ENCODE measurements at regions of chr6 and their contacts with region 1.

Region 1: DNA sequence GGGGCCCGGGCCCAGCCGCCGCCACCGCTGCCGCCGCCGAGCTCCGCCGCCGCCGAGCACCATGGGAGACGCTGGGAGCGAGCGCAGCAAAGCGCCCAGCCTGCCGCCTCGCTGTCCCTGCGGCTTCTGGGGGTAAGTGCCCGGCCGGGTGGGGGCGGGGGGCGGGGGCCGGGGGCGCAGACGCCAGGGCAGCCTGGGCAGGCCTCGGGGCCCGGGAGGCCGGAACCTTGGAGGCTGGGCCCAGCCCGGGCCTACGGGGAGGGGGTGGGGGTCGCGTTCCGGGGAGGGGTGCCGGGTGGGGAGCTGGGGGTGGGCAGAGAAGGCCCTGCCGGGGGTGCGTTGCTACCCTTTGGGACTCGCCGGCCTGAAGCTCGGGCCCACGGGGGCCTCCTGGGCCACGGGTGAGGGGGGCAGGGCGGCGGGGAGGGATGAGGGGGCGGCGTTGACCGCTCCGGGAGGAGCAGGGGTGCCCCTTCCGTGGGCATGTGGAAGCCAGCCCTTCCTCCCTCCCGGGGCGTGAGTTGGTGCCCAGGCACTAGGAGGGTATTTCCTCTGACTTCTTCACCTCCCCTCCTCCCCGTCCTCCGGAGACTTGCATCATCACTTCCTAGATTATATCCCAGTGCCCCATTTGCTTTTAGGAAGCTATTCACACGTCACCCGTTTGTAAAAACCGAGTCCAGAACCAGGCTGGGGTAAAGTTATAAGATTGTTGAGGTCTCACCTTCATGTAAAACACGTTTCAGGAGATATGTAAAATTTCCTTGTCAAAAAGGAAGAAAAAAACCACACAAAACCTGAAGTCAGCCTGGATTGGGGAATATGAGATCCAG is 574 bp downstream of the ZFAND3 start:
- DNase-seq: peak; percentile 52 to 68
- H3K4me3 ChIP-seq: peak overlapping the region; percentile 15 to 85 (median 15)
- H3K27ac ChIP-seq: peak overlapping the region; percentile 95 to 99 (median 97)
- H3K4me1 ChIP-seq: peaks cover 44 to 51% of the 10 kb centered on the region in 2 donors
- H3K27me3 ChIP-seq: no peaks in the 10 kb centered on the region
- CTCF ChIP-seq: no peak
- POLR2A ChIP-seq: no peak

Region 2: DNA sequence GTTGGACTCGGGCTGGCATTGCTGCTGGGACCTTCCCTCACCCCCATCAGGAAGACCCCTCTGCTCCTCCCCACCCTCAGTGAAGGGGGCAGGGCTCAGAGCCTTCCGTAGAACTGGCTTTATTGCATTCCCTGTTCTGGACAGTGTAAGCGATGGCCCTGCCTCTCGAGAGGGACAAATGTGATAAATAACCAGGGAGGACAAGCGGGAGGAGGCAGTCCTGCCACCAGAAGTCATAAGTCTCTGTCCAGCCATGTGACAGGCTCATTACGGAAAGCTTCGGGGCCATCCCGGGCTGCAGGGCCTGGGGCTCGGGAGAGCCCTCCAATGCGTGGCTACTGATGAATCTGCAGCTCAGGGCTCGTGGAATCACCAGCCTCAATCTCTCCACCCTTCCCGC is 64.0 kb before region 1 on chr6:
- intact Hi-C with region 1: no loop called
- DNase-seq: no peak
- H3K4me3 ChIP-seq: no peak overlapping the region
- H3K27ac ChIP-seq: no peak overlapping the region
- H3K4me1 ChIP-seq: no peaks in the 10 kb centered on the region
- H3K27me3 ChIP-seq: no peaks in the 10 kb centered on the region
- CTCF ChIP-seq: no peak
- POLR2A ChIP-seq: no peak

Region 3: GRCh38 chr6:37946057-37946456 is 126.0 kb after region 1 on chr6:
- intact Hi-C with region 1: no loop called
- DNase-seq: no peak
- H3K4me3 ChIP-seq: no peak overlapping the region
- H3K27ac ChIP-seq: no peak overlapping the region
- H3K4me1 ChIP-seq: peaks cover 9 to 37% of the 10 kb centered on the region in 2 donors
- H3K27me3 ChIP-seq: no peaks in the 10 kb centered on the region
- CTCF ChIP-seq: no peak
- POLR2A ChIP-seq: no peak

Region 4: DNA sequence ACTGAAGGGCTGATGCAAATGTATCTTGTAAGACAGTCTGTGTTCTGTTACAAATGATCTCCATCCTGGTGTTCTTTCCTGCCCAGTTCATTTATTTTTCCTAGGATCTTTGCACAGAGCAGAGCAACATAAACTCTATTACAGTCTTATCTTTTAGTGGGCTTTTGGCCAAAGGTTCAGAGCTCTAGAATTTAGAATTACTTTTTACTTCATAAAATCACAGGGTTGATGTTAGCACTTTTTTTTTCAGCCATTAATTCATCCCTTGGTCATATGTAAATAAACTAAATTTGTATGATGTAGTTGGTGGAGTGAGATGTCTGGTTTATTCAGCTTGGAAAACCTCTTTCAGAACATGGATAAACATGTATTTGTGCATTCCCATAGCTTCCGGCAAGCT is 181.3 kb after region 1 on chr6:
- intact Hi-C with region 1: loop called (anchors 10 kb)
- DNase-seq: no peak
- H3K4me3 ChIP-seq: no peak overlapping the region
- H3K27ac ChIP-seq: peak overlapping the region in 1 of 3 donors; percentile 3
- H3K4me1 ChIP-seq: peaks cover 13 to 17% of the 10 kb centered on the region in 2 donors
- H3K27me3 ChIP-seq: no peaks in the 10 kb centered on the region
- CTCF ChIP-seq: no peak
- POLR2A ChIP-seq: no peak

Measured in thyroid gland (tissue), 4 donors.